Activated B cell treated with CpG ODN at 0.5 μM for 24 hours (primary cell): ENCODE measurements at regions of chr4 and their contacts with region 1.

Region 1: GRCh38 chr4:83362492-83363329 is 28.1 kb upstream of the HPSE start:
- DNase-seq: no peak
- ATAC-seq: peak; percentile 52
- H3K4me3 Mint-ChIP-seq: no peak overlapping the region
- H3K27ac Mint-ChIP-seq: no peak overlapping the region
- H3K4me1 Mint-ChIP-seq: no peaks in the 10 kb centered on the region
- H3K27me3 Mint-ChIP-seq: no peaks in the 10 kb centered on the region
- CTCF ChIP-seq: no peak

Region 2: DNA sequence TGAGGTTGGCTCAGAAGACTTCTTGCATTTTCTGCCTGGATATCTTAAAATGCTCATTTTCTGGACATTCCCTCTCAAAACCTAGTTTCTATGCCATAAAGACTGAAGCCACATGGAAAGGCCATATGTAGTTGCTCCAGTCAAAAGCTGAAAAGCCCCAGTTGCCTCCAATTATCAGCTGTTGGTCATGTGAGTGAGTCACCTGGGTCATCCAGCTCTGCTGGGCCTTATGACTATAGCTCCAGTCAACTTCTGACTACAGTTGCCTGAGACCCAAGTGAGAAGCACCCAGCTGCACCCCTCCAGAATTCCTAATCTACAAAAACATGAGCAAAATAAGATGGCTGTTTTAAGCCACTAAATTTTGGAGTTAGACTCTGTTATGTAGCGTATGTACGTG is 51.0 kb after region 1 on chr4:
- CTCF ChIA-PET with region 1: interaction called, 3 read pairs
- POLR2A ChIA-PET with region 1: no interaction called
- intact Hi-C with region 1: loop called (anchors 10 kb)
- DNase-seq: no peak
- ATAC-seq: no peak
- H3K4me3 Mint-ChIP-seq: no peak overlapping the region
- H3K27ac Mint-ChIP-seq: no peak overlapping the region
- H3K4me1 Mint-ChIP-seq: no peaks in the 10 kb centered on the region
- H3K27me3 Mint-ChIP-seq: no peaks in the 10 kb centered on the region
- CTCF ChIP-seq: no peak

Region 3: DNA sequence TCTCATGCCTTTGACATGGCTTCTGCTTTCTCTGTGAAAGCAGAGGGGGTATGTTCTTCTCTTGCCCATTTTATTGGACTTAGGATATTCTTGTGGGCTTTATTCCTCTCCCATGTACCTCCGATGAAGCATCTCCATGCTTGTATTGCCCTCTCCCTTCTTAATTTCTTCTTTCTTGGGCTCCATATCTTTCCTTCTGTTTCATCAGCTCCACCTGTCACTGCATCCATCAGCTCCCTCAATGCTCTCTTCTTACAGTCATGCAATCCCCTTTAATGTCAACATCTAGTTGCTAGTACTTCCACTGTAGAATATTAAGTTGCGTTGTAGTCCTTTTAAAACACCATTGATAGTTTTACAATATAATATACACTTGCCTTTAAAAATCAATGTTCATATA is 430.8 kb after region 1 on chr4:
- CTCF ChIA-PET with region 1: no interaction called
- POLR2A ChIA-PET with region 1: no interaction called
- intact Hi-C with region 1: no loop called
- DNase-seq: no peak
- ATAC-seq: no peak
- H3K4me3 Mint-ChIP-seq: no peak overlapping the region
- H3K27ac Mint-ChIP-seq: no peak overlapping the region
- H3K4me1 Mint-ChIP-seq: no peaks in the 10 kb centered on the region
- H3K27me3 Mint-ChIP-seq: peaks cover 2% of the 10 kb centered on the region
- CTCF ChIP-seq: no peak